ENCODE measurements at regions of chr9 and their contacts with region 1.

Region 1: GRCh38 chr9:35882263-35882848 is 12.2 kb upstream of the OR13J1 start:
- DNase-seq: peak; percentile 76 to 81
- H3K4me3 ChIP-seq: no peak overlapping the region
- H3K27ac ChIP-seq: no peak overlapping the region
- H3K4me1 ChIP-seq: no peaks in the 10 kb centered on the region
- H3K27me3 ChIP-seq: no peaks in the 10 kb centered on the region
- CTCF ChIP-seq: peak; percentile 87 to 96 (median 91)
- POLR2A ChIP-seq: no peak

Region 2: DNA sequence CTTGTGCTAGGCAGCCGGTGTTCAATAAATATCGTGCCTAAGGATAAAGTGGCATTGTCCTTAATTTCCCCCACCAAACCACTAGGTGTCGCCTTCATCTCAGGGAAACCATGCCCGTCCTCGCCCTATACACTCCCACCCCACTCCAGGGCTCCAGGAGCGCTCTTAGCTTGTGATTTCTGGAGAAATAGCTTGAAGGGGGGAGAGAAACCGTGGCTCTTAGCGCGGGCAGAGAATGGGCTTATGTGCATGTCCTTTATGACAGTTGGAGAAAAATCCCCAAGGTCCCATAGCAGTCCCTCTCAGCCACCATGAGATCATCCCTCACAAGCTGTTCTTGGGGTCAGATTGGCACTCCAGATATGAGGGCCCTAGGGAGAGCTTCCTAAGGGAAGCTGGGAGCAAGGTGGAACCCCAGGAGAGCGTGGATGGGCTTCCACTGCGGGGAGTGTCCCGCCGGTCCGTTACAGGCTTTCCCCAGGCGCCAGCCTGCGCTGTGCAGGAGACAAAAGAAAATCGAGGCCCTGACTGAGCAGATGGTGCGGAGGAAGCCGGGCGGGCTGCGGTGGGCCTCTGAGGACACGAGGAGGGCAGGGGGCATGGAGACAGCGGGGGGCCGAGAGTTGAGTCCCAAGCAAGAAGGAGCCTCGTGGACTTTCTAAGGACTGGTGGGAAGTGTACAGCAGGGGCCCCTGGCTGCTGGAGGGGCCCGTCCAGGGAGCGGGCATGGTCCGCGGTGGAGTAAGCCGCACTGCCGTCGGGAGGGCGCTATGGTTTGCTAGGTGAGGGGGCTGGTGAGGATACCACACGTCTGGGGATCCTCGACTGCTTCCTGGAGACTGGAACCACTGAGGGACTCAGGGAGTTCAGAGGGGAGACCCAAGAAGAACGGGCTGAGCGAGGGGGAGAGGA is 91.7 kb before region 1 on chr9:
- intact Hi-C with region 1: loop called (anchors 5 kb)
- DNase-seq: peak; percentile 61
- H3K4me3 ChIP-seq: peak overlapping the region; percentile 56 to 81 (median 56)
- H3K27ac ChIP-seq: peak overlapping the region; percentile 54 to 91
- H3K4me1 ChIP-seq: peaks cover 0 to 4% of the 10 kb centered on the region in 2 donors
- H3K27me3 ChIP-seq: no peaks in the 10 kb centered on the region
- CTCF ChIP-seq: peak; percentile 67 to 93 (median 92)
- POLR2A ChIP-seq: no peak

Measured in breast epithelium (tissue), 4 donors.